Posterior vena cava (tissue), 2 donors: ENCODE measurements at regions of chrX and their contacts with region 1.

Region 1: GRCh38 chrX:38192007-38192810 is 28.5 kb downstream of the SRPX start:
- DNase-seq: no peak

Region 2: GRCh38 chrX:37388413-37388812 is 803.8 kb before region 1 on chrX:
- intact Hi-C with region 1: loop called in 1 of 2 experiments (anchors 5 kb)
- DNase-seq: no peak

Region 3: GRCh38 chrX:38175140-38175539 is 17.1 kb before region 1 on chrX:
- intact Hi-C with region 1: no loop called
- DNase-seq: no peak

Region 4: GRCh38 chrX:38409289-38409688 is 217.1 kb after region 1 on chrX:
- intact Hi-C with region 1: no loop called
- DNase-seq: no peak